ENCODE measurements at regions of chr4 and their contacts with region 1.

Region 1: DNA sequence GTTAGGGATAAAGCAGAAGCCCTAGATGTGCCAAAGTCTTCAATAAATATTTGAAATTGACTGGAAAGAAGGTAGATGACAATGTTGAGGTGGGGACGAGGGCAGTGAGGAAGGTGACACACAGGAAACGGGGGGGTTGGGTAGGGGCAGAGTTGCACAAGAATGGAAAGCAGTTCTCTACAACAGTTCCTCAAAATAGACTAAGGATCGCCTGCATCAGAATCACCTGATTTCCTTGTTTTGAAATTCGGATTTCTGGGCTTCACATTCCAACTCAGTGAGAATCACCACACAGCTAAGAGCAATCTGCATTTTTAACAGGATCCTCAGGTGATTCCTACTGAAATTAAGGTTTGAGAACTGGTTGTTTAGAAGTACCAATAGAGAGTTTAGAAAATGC is 70.6 kb downstream of the ARFIP1 start:
- DNase-seq: no peak
- ATAC-seq: peak; percentile 75
- H3K4me3 Mint-ChIP-seq: peak overlapping the region; percentile 52
- H3K27ac Mint-ChIP-seq: peak overlapping the region; percentile 78
- H3K4me1 Mint-ChIP-seq: peaks cover 25% of the 10 kb centered on the region
- H3K27me3 Mint-ChIP-seq: no peaks in the 10 kb centered on the region
- CTCF ChIP-seq: no peak

Region 2: DNA sequence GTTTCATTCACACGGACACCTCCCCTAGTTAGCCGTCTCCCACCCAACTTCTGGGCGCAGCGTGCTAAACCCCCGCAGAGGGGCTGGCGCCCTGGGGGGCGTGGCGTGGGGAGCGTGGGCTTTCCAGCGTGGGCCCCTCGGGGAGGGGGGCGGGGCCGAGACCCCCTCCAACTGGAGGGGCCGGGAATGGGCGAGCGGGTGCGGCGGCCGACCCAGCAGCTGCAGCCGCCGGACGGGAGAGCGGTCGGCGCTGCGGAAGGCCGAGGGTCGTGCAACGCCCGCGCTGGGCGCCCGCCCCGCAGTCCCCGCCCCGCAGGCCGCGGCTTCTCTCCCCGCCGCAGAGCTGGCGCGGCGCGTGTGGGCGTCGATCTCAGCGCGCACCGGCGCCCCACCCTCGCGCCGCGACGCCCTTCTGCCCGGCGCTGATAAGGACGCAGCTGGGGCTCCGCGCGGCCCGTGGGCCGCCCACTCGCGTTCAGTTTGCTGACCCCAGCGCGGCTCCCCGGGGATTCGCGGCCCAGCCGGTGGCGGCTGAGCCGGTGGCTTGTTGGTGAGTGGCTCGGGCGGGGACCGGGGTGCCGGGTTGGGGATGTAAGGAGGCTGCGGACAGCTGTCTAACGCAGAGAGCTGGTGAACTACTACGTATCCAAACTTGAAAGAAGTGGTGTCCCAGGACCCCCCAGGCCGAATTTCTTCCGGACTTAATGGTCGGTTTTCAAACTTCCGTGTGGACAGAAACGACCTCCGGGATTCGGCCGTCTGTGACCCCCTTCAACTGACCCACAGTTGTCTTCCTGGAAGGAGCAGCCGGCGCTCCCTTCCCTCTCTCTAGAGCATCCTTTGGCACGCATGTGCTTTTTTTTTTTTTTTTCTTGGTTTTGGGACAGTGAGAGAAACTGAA is 87.2 kb after region 1 on chr4:
- CTCF ChIA-PET with region 1: no interaction called
- POLR2A ChIA-PET with region 1: no interaction called
- intact Hi-C with region 1: no loop called
- DNase-seq: peak; percentile 34
- ATAC-seq: peak; percentile 69
- H3K4me3 Mint-ChIP-seq: peak overlapping the region; percentile 83
- H3K27ac Mint-ChIP-seq: no peak overlapping the region
- H3K4me1 Mint-ChIP-seq: peaks cover 22% of the 10 kb centered on the region
- H3K27me3 Mint-ChIP-seq: peaks cover 57% of the 10 kb centered on the region
- CTCF ChIP-seq: no peak

Region 3: DNA sequence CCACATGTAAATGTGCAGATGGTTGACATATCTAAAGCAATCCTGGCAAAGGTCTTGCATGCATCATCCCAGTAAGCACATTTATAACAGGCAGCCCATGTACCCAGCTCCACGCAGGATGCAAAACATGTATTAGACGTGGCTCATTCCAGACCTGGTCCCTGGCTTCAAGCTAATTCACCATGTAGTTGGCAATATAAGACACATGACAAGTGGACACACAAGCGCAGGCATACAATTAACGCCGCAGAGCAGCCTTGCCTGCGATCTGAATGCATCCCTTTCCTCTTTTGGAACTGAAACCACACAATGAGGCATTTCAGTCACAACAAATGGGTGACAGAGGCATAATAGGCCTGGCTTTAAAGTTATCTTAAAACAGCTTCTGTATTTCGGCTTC is 239.4 kb after region 1 on chr4:
- CTCF ChIA-PET with region 1: interaction called, 84 read pairs
- POLR2A ChIA-PET with region 1: interaction called, 3 read pairs
- intact Hi-C with region 1: loop called (anchors 1 kb)
- DNase-seq: no peak
- ATAC-seq: no peak
- H3K4me3 Mint-ChIP-seq: no peak overlapping the region
- H3K27ac Mint-ChIP-seq: no peak overlapping the region
- H3K4me1 Mint-ChIP-seq: peaks cover 7% of the 10 kb centered on the region
- H3K27me3 Mint-ChIP-seq: no peaks in the 10 kb centered on the region
- CTCF ChIP-seq: no peak

Region 4: GRCh38 chr4:153318696-153319320 is 468.4 kb after region 1 on chr4:
- CTCF ChIA-PET with region 1: no interaction called
- POLR2A ChIA-PET with region 1: no interaction called
- intact Hi-C with region 1: loop called (anchors 1 kb)
- DNase-seq: no peak
- ATAC-seq: peak; percentile 65
- H3K4me3 Mint-ChIP-seq: no peak overlapping the region
- H3K27ac Mint-ChIP-seq: no peak overlapping the region
- H3K4me1 Mint-ChIP-seq: no peaks in the 10 kb centered on the region
- H3K27me3 Mint-ChIP-seq: no peaks in the 10 kb centered on the region
- CTCF ChIP-seq: peak; percentile 27

Region 5: GRCh38 chr4:153643406-153644383 is 793.3 kb after region 1 on chr4:
- CTCF ChIA-PET with region 1: interaction called, 3 read pairs
- POLR2A ChIA-PET with region 1: no interaction called
- intact Hi-C with region 1: loop called (anchors 2 kb)
- DNase-seq: no peak
- ATAC-seq: peak; percentile 95
- H3K4me3 Mint-ChIP-seq: no peak overlapping the region
- H3K27ac Mint-ChIP-seq: no peak overlapping the region
- H3K4me1 Mint-ChIP-seq: peaks cover 10% of the 10 kb centered on the region
- H3K27me3 Mint-ChIP-seq: no peaks in the 10 kb centered on the region
- CTCF ChIP-seq: peak; percentile 36

Region 6: GRCh38 chr4:153750197-153750817 is 899.9 kb after region 1 on chr4:
- CTCF ChIA-PET with region 1: interaction called, 4 read pairs
- POLR2A ChIA-PET with region 1: no interaction called
- intact Hi-C with region 1: loop called (anchors 1 kb)
- DNase-seq: no peak
- ATAC-seq: peak; percentile 57
- H3K4me3 Mint-ChIP-seq: no peak overlapping the region
- H3K27ac Mint-ChIP-seq: no peak overlapping the region
- H3K4me1 Mint-ChIP-seq: no peaks in the 10 kb centered on the region
- H3K27me3 Mint-ChIP-seq: peaks cover 13% of the 10 kb centered on the region
- CTCF ChIP-seq: peak; percentile 19